Psoas muscle (tissue), 8 donors: ENCODE measurements at regions of chr9 and their contacts with region 1.

Region 1: GRCh38 chr9:7640231-7640630 is 159.3 kb downstream of the DMAC1 start:
- DNase-seq: no peak
- ATAC-seq: no peak
- H3K4me3 ChIP-seq: no peak overlapping the region
- H3K27ac ChIP-seq: no peak overlapping the region
- H3K4me1 ChIP-seq: no peaks in the 10 kb centered on the region
- H3K27me3 ChIP-seq: no peaks in the 10 kb centered on the region
- CTCF ChIP-seq: no peak

Region 2: DNA sequence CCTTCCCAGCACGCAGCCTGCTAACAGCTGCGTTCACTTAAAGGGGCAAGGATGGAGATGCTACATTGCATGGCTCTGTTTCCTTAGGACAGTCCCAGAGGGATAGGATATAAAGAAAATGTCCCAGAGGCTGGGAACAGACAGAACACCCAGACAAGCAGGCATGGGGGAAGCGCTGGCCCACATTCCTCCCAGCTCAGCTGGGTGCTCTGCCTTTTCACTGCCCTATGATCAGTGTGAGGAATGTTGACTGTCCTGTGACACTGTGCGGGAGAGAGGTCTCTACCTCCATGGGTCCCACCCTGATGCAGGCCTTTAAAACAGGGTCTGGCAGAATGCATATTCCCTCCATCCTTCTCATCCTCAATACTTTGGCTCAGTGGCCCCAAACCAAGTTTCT is 618.8 kb after region 1 on chr9:
- intact Hi-C with region 1: loop called in 1 of 2 experiments (anchors 5 kb)
- DNase-seq: no peak
- ATAC-seq: no peak
- H3K4me3 ChIP-seq: no peak overlapping the region
- H3K27ac ChIP-seq: no peak overlapping the region
- H3K4me1 ChIP-seq: peaks cover 6% of the 10 kb centered on the region
- H3K27me3 ChIP-seq: no peaks in the 10 kb centered on the region
- CTCF ChIP-seq: no peak